Heart left ventricle (tissue), 16 donors: ENCODE measurements at regions of chr7 and their contacts with region 1.

Region 1: DNA sequence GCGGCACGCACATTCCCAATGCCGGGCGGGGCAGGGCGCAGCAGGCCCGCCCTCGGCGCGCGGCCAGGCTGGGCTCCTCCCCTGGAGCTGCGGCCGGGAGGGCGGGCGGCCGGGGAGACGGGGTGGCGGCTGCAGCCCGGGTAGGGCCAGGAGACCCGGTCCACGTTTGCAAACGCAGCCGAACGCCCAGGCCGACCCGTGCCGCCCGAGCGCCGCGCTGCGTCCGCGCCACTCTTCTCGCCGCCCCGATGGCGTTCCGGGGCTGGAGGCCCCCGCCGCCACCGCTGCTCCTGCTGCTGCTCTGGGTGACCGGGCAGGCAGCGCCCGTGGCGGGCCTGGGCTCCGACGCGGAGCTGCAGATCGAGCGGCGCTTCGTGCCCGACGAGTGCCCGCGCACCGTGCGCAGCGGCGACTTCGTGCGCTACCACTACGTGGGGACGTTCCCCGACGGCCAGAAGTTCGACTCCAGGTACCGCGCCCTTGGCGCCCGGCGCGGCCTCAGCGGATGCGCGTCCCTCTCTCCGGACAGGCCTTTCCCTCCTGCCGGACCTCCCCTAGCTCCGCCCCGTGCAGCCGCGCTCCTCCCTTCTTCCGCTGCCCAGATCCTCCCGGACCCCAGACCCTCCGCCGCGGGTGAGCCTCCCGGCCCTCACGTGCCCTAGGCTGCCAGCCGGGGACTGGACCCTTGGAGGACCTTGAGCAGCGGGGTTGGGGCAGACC is at the start of gene FKBP9:
- DNase-seq: peak; percentile 85 to 96 (median 90)
- ATAC-seq: peak; percentile 85 to 97 (median 94)
- H3K4me3 ChIP-seq: peak within 1 kb of the TSS; percentile 79 to 100 (median 92)
- H3K27ac ChIP-seq: peak within 1 kb of the TSS; percentile 89 to 100 (median 98)
- H3K4me1 ChIP-seq: peaks cover 0 to 32% (median 13%) of the 10 kb centered on the region in 12 donors
- H3K27me3 ChIP-seq: no peaks in the 10 kb centered on the region
- CTCF ChIP-seq: peak in 1 of 12 donors; percentile 6
- POLR2A ChIP-seq: peak in 1 of 2 donors; percentile 85
- total RNA-seq, gene FKBP9: 91.1 to 146 (median 130) TPM

Region 2: GRCh38 chr7:33040803-33041516 is 83.5 kb after region 1 on chr7:
- intact Hi-C with region 1: loop called in 4 of 10 experiments (anchors 5 kb)
- DNase-seq: peak in 2 of 5 donors; percentile 19 to 37
- ATAC-seq: peak; percentile 68 to 84 (median 82)
- H3K4me3 ChIP-seq: peak overlapping the region in 10 of 12 donors; percentile 6 to 60 (median 52)
- H3K27ac ChIP-seq: peak overlapping the region in 11 of 12 donors; percentile 4 to 83 (median 67)
- H3K4me1 ChIP-seq: peaks cover 0 to 67% (median 52%) of the 10 kb centered on the region in 12 donors
- H3K27me3 ChIP-seq: no peaks in the 10 kb centered on the region
- CTCF ChIP-seq: no peak
- POLR2A ChIP-seq: no peak

Region 3: GRCh38 chr7:33099154-33099940 is 141.9 kb after region 1 on chr7:
- intact Hi-C with region 1: no loop called
- DNase-seq: peak in 1 of 5 donors; percentile 28
- ATAC-seq: peak; percentile 33 to 85 (median 74)
- H3K4me3 ChIP-seq: no peak overlapping the region
- H3K27ac ChIP-seq: peak overlapping the region in 5 of 12 donors; percentile 44 to 64 (median 57)
- H3K4me1 ChIP-seq: peaks cover 0 to 18% (median 2%) of the 10 kb centered on the region in 12 donors
- H3K27me3 ChIP-seq: no peaks in the 10 kb centered on the region
- CTCF ChIP-seq: no peak
- POLR2A ChIP-seq: no peak